ENCODE measurements at regions of chr6 and their contacts with region 1.

Region 1: GRCh38 chr6:73285674-73286283 is 22.8 kb upstream of the KHDC1 start:
- DNase-seq: no peak
- H3K4me3 ChIP-seq: no peak overlapping the region
- H3K27ac ChIP-seq: no peak overlapping the region
- H3K4me1 ChIP-seq: no peaks in the 10 kb centered on the region
- H3K27me3 ChIP-seq: no peaks in the 10 kb centered on the region
- CTCF ChIP-seq: peak in 2 of 3 experiments; percentile 46 to 47; a peak in 2 of 4 replicates
- EP300 ChIP-seq: no peak
- POLR2A ChIP-seq: no peak
- RAD21 ChIP-seq: peak; percentile 63 to 72

Region 2: DNA sequence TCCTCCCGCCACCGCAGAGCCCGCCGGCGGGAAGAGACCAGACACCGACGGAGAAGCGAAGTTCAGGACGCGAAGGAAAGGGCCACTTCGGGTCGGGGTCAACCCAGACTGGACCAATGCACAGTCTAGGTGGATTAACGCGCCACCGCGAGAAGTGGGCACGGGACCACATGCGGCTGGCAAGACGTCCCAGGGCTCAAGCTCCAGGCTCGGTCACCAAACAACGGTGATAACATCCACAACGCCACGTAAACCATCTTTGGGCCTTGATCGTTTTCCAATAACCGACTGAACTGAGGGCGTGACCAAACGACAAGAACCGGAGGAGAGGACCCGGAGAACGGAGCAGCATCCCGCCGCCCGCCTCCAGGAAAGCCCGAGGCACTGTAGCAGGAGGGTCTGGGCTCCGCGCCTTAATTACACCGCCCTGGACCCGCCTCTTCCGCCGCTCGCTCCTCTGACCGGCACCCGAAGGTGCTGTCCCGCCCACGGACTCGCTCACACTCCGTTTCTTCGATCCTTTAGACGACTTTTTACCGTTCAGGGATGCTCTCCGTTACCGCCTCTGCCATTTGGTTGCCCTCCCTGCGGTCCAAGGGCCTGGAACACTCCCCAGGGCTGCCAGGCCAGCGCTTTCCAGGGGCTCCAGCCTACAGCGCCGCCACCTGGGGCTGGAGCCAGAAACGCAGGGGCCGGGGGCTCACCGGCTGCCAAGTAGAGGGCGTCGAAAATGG is 24.2 kb after region 1 on chr6:
- CTCF ChIA-PET with region 1: interaction called, 18 read pairs
- POLR2A ChIA-PET with region 1: interaction called, 5 read pairs
- DNase-seq: peak in 1 of 2 experiments; percentile 61
- H3K4me3 ChIP-seq: peak overlapping the region; percentile 53 to 69 (median 61)
- H3K27ac ChIP-seq: no peak overlapping the region
- H3K4me1 ChIP-seq: peaks cover 0 to 9% (median 0%) of the 10 kb centered on the region in 4 experiments; a peak in 2 of 7 replicates
- H3K27me3 ChIP-seq: no peaks in the 10 kb centered on the region
- CTCF ChIP-seq: peak; percentile 21 to 34 (median 33); a peak in 3 of 4 replicates
- EP300 ChIP-seq: no peak
- POLR2A ChIP-seq: peak in 1 of 2 experiments; percentile 57; a peak in 2 of 3 replicates
- RAD21 ChIP-seq: peak in 1 of 2 experiments; percentile 42; a peak in 2 of 4 replicates